K562 (cell line): ENCODE measurements at regions of chr12 and their contacts with region 1.

Region 1: GRCh38 chr12:53180220-53180930 is at the starts of genes CSAD and ZNF740:
- DNase-seq: peak; percentile 96 to 99 (median 97)
- ATAC-seq: peak; percentile 98
- H3K4me3 ChIP-seq: peak within 1 kb of the TSS; percentile 75
- H3K27ac ChIP-seq: peak within 1 kb of the TSS; percentile 86
- H3K4me1 ChIP-seq: peaks cover 16 to 26% of the 10 kb centered on the region in 2 experiments; a peak in 4 of 5 replicates
- H3K27me3 ChIP-seq: no peaks in the 10 kb centered on the region
- CTCF ChIP-seq: peak in 2 of 3 experiments; percentile 21 to 34; a peak in 3 of 6 replicates
- EP300 ChIP-seq: 0 out of 2 replicates have a peak, but pooled peaks have one; percentile 42
- POLR2A ChIP-seq: peak; percentile 86
- RAD21 ChIP-seq: 0 out of 4 replicates have a peak, but pooled peaks of 1 of the 2 experiments have one; percentile 5
- polyA plus RNA-seq, gene CSAD: 1.8 to 2.4 TPM
- polyA plus RNA-seq, gene ZNF740: 0.57 to 1.4 TPM

Region 2: GRCh38 chr12:52423661-52424500 is 756.5 kb before region 1 on chr12:
- CTCF ChIA-PET with region 1: no interaction called
- POLR2A ChIA-PET with region 1: no interaction called
- in situ Hi-C with region 1: loop called (anchors 10 kb)
- intact Hi-C with region 1: no loop called
- DNase-seq: no peak
- ATAC-seq: no peak
- H3K4me3 ChIP-seq: no peak overlapping the region
- H3K27ac ChIP-seq: no peak overlapping the region
- H3K4me1 ChIP-seq: no peaks in the 10 kb centered on the region
- H3K27me3 ChIP-seq: peaks cover 0 to 36% of the 10 kb centered on the region in 2 experiments; a peak in 3 of 5 replicates
- CTCF ChIP-seq: no peak
- EP300 ChIP-seq: no peak
- POLR2A ChIP-seq: no peak
- RAD21 ChIP-seq: no peak

Region 3: GRCh38 chr12:53220801-53221202 is 40.4 kb after region 1 on chr12:
- CTCF ChIA-PET with region 1: no interaction called
- POLR2A ChIA-PET with region 1: interaction called, 6 read pairs
- in situ Hi-C with region 1: no loop called
- intact Hi-C with region 1: loop called (anchors 2 kb)
- DNase-seq: peak; percentile 95 to 96 (median 96)
- ATAC-seq: peak; percentile 86
- H3K4me3 ChIP-seq: peak overlapping the region; percentile 64
- H3K27ac ChIP-seq: peak overlapping the region; percentile 99
- H3K4me1 ChIP-seq: peaks cover 50 to 79% of the 10 kb centered on the region in 2 experiments
- H3K27me3 ChIP-seq: no peaks in the 10 kb centered on the region
- CTCF ChIP-seq: no peak
- EP300 ChIP-seq: no peak
- POLR2A ChIP-seq: no peak
- RAD21 ChIP-seq: no peak

Region 4: GRCh38 chr12:53414756-53415417 is 234.5 kb after region 1 on chr12:
- CTCF ChIA-PET with region 1: no interaction called
- POLR2A ChIA-PET with region 1: no interaction called
- in situ Hi-C with region 1: no loop called
- intact Hi-C with region 1: no loop called
- DNase-seq: peak in 3 of 4 experiments; percentile 5 to 48 (median 15)
- ATAC-seq: peak; percentile 74
- H3K4me3 ChIP-seq: no peak overlapping the region
- H3K27ac ChIP-seq: no peak overlapping the region
- H3K4me1 ChIP-seq: peaks cover 3 to 15% of the 10 kb centered on the region in 2 experiments; a peak in 4 of 5 replicates
- H3K27me3 ChIP-seq: no peaks in the 10 kb centered on the region
- CTCF ChIP-seq: no peak
- EP300 ChIP-seq: no peak
- POLR2A ChIP-seq: no peak
- RAD21 ChIP-seq: no peak

Region 5: GRCh38 chr12:54075974-54076373 is 895.6 kb after region 1 on chr12:
- CTCF ChIA-PET with region 1: no interaction called
- POLR2A ChIA-PET with region 1: no interaction called
- in situ Hi-C with region 1: no loop called
- intact Hi-C with region 1: no loop called
- DNase-seq: no peak
- ATAC-seq: 0 out of 3 replicates have a peak, but pooled peaks have one; percentile 40
- H3K4me3 ChIP-seq: no peak overlapping the region
- H3K27ac ChIP-seq: no peak overlapping the region
- H3K4me1 ChIP-seq: peaks cover 0 to 5% of the 10 kb centered on the region in 2 experiments; a peak in 3 of 5 replicates
- H3K27me3 ChIP-seq: 0 out of 5 replicates have a peak, but pooled peaks cover 0 to 2% of the 10 kb centered on the region in 2 experiments
- CTCF ChIP-seq: no peak
- EP300 ChIP-seq: no peak
- POLR2A ChIP-seq: no peak
- RAD21 ChIP-seq: no peak